Activated CD8-positive, alpha-beta T cell treated with anti-CD3 and anti-CD28 coated beads for 36 hours (primary cell): ENCODE measurements at regions of chr1 and their contacts with region 1.

Region 1: DNA sequence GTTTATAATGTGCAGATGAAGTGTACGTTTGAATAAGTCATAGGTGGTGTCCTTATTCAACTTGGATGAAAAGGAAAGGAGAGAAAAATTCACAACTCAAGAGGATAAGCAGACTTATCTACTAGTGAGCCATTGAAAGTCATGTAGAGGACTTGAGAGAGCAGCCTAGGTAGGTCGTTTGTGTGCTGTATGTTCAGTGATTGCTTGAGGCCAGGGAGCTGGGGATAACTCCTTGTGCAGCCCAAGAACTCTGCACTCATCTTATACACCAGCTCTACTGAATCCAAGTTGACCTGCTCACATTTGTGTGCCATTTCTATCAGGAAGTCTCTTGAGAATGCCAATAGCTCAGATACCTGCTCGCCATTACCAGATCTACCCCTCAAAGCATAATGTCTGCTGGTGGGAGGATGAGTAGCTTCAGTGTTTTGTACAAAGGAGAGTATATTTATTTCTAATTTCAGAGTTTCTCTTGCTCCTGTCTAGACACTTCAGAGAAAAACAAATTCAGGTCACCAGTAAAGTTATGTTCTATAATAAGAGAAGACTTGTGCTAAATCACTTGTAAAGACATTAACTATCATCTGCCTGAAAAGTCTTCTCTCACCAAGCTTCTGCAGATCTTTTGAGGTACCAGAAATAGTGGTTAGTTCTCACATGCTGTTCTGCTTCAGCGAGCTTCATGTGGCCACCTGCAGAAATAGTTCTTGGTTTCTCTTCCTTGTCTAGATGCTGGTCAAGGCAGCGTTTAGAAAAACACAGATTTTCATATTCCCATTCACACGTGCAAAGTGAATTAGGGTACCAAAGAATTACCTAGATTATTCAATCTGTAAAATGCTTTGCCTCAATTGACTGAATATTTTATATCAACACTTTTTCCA is 10.8 kb downstream of the S1PR1 start:
- DNase-seq: no peak
- ATAC-seq: no peak
- H3K4me3 Mint-ChIP-seq: peak overlapping the region; percentile 1
- H3K27ac Mint-ChIP-seq: peak overlapping the region; percentile 44
- H3K4me1 Mint-ChIP-seq: peaks cover 64% of the 10 kb centered on the region
- H3K27me3 Mint-ChIP-seq: no peaks in the 10 kb centered on the region
- CTCF ChIP-seq: no peak

Region 2: DNA sequence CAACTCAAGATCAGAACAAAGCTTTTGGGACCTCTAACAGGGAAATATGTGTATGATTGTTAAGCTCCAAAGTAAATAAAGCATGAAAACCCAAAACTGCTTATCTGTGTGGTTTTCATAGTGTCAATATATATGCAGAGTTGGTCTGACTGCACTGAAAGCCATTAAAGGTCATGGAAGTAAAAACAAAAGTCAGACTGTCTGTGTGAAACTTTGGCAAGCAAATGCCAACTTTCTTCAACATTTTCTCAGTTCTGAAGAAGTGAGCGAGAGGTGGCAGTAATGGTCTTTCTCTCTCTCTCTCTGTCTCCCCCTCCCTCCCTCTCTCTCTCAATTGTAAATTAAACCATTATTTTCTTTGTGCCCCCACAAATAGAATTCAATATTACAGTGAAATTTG is 110.9 kb before region 1 on chr1:
- CTCF ChIA-PET with region 1: interaction called, 10 read pairs
- POLR2A ChIA-PET with region 1: no interaction called
- intact Hi-C with region 1: no loop called
- DNase-seq: peak; percentile 59
- ATAC-seq: peak; percentile 85
- H3K4me3 Mint-ChIP-seq: peak overlapping the region; percentile 33
- H3K27ac Mint-ChIP-seq: peak overlapping the region; percentile 80
- H3K4me1 Mint-ChIP-seq: peaks cover 64% of the 10 kb centered on the region
- H3K27me3 Mint-ChIP-seq: no peaks in the 10 kb centered on the region
- CTCF ChIP-seq: peak; percentile 56